CD4-positive, alpha-beta memory T cell (primary cell): ENCODE measurements at regions of chr18 and their contacts with region 1.

Region 1: DNA sequence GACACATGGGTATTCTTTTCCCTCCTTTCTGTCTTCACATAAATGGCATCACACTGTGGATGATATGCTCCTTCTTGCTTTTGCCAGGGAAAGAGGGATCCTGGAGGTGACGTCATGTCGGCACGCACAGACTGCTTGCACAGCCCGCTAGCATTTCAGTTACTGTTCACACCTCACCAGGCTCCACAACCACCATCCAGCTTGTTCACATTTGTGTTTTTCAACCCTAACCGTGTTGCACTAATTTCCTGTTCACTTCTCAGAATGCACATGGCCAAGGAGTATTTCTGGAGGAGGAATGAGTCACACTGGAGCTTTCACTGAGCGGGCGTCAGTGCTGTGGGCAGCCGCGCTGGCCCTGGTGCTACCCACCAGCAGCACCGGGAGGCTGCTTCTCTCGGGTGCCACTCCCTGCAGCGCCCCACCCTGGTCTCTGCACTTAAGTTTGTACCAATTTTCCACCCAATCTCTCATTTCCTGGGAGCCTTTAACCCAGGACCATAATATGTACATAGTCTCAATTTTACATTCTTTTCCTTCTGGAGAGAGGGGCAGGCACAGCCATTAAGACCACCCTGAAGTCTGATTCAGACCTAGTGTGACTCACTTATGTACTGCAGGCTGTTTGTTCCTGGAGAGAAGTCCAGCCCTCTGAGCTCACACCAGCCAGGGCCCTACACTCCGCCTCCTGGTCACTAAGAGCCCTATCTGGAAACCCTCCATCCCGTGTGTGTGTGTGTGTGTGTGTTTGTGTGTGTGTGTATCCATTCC is 65.1 kb downstream of the MBP start:
- DNase-seq: peak; percentile 52 to 77 (median 62)
- H3K4me3 ChIP-seq: peak overlapping the region in 1 of 2 donors; percentile 26
- H3K4me3 Mint-ChIP-seq: peak overlapping the region; percentile 76 to 87 (median 81)
- H3K27ac ChIP-seq: peak overlapping the region; percentile 78
- H3K27ac Mint-ChIP-seq: peak overlapping the region; percentile 97 to 100 (median 99)
- H3K4me1 ChIP-seq: peaks cover 100% of the 10 kb centered on the region
- H3K4me1 Mint-ChIP-seq: peaks cover 89 to 100% (median 95%) of the 10 kb centered on the region in 4 donors
- H3K27me3 ChIP-seq: no peaks in the 10 kb centered on the region
- H3K27me3 Mint-ChIP-seq: no peaks in the 10 kb centered on the region

Region 2: DNA sequence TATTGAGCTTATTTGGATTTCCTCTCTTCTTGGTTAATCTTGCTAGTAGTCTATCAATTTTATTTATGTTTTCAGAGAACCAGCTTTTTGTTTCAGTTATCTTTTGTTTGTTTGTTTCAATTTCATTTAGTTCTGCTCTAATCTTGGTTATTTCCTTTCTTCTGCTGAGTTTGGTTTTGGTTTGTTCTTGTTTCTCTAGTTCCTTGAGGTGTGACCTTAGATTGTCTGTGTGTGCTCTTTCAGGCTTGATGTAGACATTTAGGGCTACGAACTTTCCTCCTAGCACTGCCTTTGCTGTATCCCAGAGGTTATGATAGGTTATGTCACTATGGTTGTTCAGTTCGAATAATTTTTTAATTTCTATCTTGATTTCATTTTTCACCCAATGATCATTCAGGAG is 103.5 kb before region 1 on chr18:
- CTCF ChIA-PET with region 1: no interaction called
- POLR2A ChIA-PET with region 1: no interaction called
- intact Hi-C with region 1: no loop called
- DNase-seq: no peak
- H3K4me3 ChIP-seq: no peak overlapping the region
- H3K4me3 Mint-ChIP-seq: peak overlapping the region in 4 of 8 donors; percentile 0 to 36 (median 12)
- H3K27ac ChIP-seq: no peak overlapping the region
- H3K27ac Mint-ChIP-seq: peak overlapping the region in 4 of 7 donors; percentile 15 to 48 (median 34)
- H3K4me1 ChIP-seq: peaks cover 14% of the 10 kb centered on the region
- H3K4me1 Mint-ChIP-seq: peaks cover 18 to 39% (median 24%) of the 10 kb centered on the region in 4 donors
- H3K27me3 ChIP-seq: no peaks in the 10 kb centered on the region
- H3K27me3 Mint-ChIP-seq: no peaks in the 10 kb centered on the region

Region 3: DNA sequence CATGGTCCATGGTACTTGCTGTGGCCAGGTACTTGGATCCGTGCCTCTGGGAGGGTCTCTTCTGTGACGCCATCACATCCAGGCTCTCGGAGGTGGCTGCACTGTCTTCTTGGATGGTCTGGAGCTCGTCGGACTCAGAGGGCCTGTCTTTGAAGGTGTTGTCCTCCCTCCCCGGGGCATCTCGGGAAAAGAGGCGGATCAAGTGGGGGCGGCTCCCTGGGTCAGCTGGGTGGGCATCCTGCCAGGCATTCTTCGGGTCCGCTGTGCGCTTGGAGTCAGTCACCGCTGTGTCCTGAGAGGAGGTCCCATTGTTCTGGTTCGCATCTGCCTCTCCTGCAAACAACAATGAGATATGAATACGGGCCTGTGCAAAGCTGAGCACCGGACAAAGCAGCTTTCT is 50.5 kb before region 1 on chr18:
- CTCF ChIA-PET with region 1: no interaction called
- POLR2A ChIA-PET with region 1: no interaction called
- intact Hi-C with region 1: no loop called
- DNase-seq: no peak
- H3K4me3 ChIP-seq: no peak overlapping the region
- H3K4me3 Mint-ChIP-seq: no peak overlapping the region
- H3K27ac ChIP-seq: no peak overlapping the region
- H3K27ac Mint-ChIP-seq: peak overlapping the region in 1 of 7 donors; percentile 4
- H3K4me1 ChIP-seq: no peaks in the 10 kb centered on the region
- H3K4me1 Mint-ChIP-seq: peaks cover 27 to 55% (median 39%) of the 10 kb centered on the region in 4 donors
- H3K27me3 ChIP-seq: no peaks in the 10 kb centered on the region
- H3K27me3 Mint-ChIP-seq: no peaks in the 10 kb centered on the region

Region 4: DNA sequence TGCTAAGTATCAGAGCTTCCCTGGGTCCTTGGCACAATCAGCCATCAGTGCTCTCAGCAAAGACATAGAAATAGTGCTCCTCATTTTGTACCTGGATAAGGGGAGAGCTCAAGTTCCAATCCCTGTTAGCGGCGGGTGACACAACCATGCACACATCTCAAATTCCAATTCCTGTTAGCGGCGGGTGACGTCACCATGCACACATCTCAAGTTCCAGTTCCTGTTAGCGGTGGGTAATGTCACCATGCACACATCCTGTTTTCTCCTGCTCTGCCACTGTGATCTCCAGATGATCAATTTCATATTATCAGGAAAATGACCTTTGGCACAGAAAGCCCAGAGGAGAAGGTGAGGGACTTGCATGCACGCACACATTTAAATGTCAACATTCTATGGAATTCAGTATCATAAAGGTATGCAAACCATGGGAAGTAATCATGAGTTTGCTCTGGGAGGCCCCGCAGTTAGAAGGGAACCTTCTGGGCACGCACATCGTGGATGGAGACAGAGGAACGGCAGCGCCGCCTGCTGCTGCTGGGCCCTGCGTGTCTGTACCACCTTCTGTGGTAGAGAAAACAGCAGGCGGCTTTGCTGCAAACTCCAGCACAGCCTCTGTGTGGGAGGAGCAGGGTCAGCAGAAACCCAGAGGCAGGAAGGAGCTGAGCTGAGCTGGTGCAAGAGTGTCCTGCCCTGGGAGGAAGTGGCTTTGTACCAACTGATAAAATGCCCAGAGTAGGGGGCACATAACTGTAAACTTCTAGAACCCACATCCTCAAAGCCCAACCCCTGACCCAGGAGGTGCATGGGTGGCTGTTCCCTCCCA is 12.7 kb before region 1 on chr18:
- CTCF ChIA-PET with region 1: interaction called, 60 read pairs
- POLR2A ChIA-PET with region 1: interaction called, 160 read pairs
- intact Hi-C with region 1: loop called (anchors 1 kb)
- DNase-seq: peak; percentile 80 to 88 (median 86)
- H3K4me3 ChIP-seq: peak overlapping the region in 1 of 2 donors; percentile 54
- H3K4me3 Mint-ChIP-seq: peak overlapping the region; percentile 72 to 92 (median 86)
- H3K27ac ChIP-seq: peak overlapping the region; percentile 84
- H3K27ac Mint-ChIP-seq: peak overlapping the region; percentile 93 to 100 (median 97)
- H3K4me1 ChIP-seq: peaks cover 83% of the 10 kb centered on the region
- H3K4me1 Mint-ChIP-seq: peaks cover 56 to 79% (median 68%) of the 10 kb centered on the region in 4 donors
- H3K27me3 ChIP-seq: no peaks in the 10 kb centered on the region
- H3K27me3 Mint-ChIP-seq: no peaks in the 10 kb centered on the region

Region 5: GRCh38 chr18:77101410-77102258 is 34.2 kb after region 1 on chr18:
- CTCF ChIA-PET with region 1: interaction called, 21 read pairs
- POLR2A ChIA-PET with region 1: interaction called, 150 read pairs
- intact Hi-C with region 1: loop called (anchors 1 kb)
- DNase-seq: peak in 2 of 5 donors; percentile 27 to 66
- H3K4me3 ChIP-seq: peak overlapping the region; percentile 31 to 39
- H3K4me3 Mint-ChIP-seq: peak overlapping the region; percentile 78 to 89 (median 83)
- H3K27ac ChIP-seq: peak overlapping the region; percentile 81
- H3K27ac Mint-ChIP-seq: peak overlapping the region; percentile 97 to 98 (median 98)
- H3K4me1 ChIP-seq: peaks cover 99% of the 10 kb centered on the region
- H3K4me1 Mint-ChIP-seq: peaks cover 79 to 99% (median 90%) of the 10 kb centered on the region in 4 donors
- H3K27me3 ChIP-seq: no peaks in the 10 kb centered on the region
- H3K27me3 Mint-ChIP-seq: no peaks in the 10 kb centered on the region

Region 6: GRCh38 chr18:77124452-77124922 is 57.0 kb after region 1 on chr18:
- CTCF ChIA-PET with region 1: interaction called, 28 read pairs
- POLR2A ChIA-PET with region 1: interaction called, 178 read pairs
- intact Hi-C with region 1: no loop called
- DNase-seq: peak in 4 of 5 donors; percentile 38 to 79 (median 46)
- H3K4me3 ChIP-seq: peak overlapping the region in 1 of 2 donors; percentile 34
- H3K4me3 Mint-ChIP-seq: peak overlapping the region; percentile 71 to 88 (median 80)
- H3K27ac ChIP-seq: peak overlapping the region; percentile 66
- H3K27ac Mint-ChIP-seq: peak overlapping the region; percentile 86 to 96 (median 89)
- H3K4me1 ChIP-seq: peaks cover 99% of the 10 kb centered on the region
- H3K4me1 Mint-ChIP-seq: peaks cover 75 to 100% (median 91%) of the 10 kb centered on the region in 4 donors
- H3K27me3 ChIP-seq: no peaks in the 10 kb centered on the region
- H3K27me3 Mint-ChIP-seq: no peaks in the 10 kb centered on the region

Region 7: GRCh38 chr18:77207540-77207939 is 140.1 kb after region 1 on chr18:
- CTCF ChIA-PET with region 1: interaction called, 10 read pairs
- POLR2A ChIA-PET with region 1: interaction called, 8 read pairs
- intact Hi-C with region 1: loop called (anchors 5 kb)
- DNase-seq: peak; percentile 55 to 79 (median 67)
- H3K4me3 ChIP-seq: no peak overlapping the region
- H3K4me3 Mint-ChIP-seq: peak overlapping the region; percentile 60 to 80 (median 72)
- H3K27ac ChIP-seq: no peak overlapping the region
- H3K27ac Mint-ChIP-seq: peak overlapping the region; percentile 41 to 92 (median 85)
- H3K4me1 ChIP-seq: peaks cover 37% of the 10 kb centered on the region
- H3K4me1 Mint-ChIP-seq: peaks cover 29 to 52% (median 41%) of the 10 kb centered on the region in 4 donors
- H3K27me3 ChIP-seq: no peaks in the 10 kb centered on the region
- H3K27me3 Mint-ChIP-seq: peaks cover 0 to 4% of the 10 kb centered on the region in 2 donors